Activated naive CD4-positive, alpha-beta T cell treated with anti-CD3 and anti-CD28 coated beads for 36 hours (primary cell): ENCODE measurements at regions of chr13 and their contacts with region 1.

Region 1: GRCh38 chr13:113029487-113030258 is 60.7 kb downstream of the MCF2L start:
- DNase-seq: peak; percentile 65
- H3K4me3 Mint-ChIP-seq: no peak overlapping the region
- H3K27ac Mint-ChIP-seq: no peak overlapping the region
- H3K4me1 Mint-ChIP-seq: no peaks in the 10 kb centered on the region
- H3K27me3 Mint-ChIP-seq: no peaks in the 10 kb centered on the region

Region 2: GRCh38 chr13:112968908-112969691 is 60.6 kb before region 1 on chr13 and contains the start of gene MCF2L:
- CTCF ChIA-PET with region 1: interaction called, 4 read pairs
- intact Hi-C with region 1: loop called (anchors 1 kb)
- DNase-seq: peak; percentile 76
- H3K4me3 Mint-ChIP-seq: peak within 1 kb of the TSS; percentile 91
- H3K27ac Mint-ChIP-seq: peak within 1 kb of the TSS; percentile 74
- H3K4me1 Mint-ChIP-seq: peaks cover 25% of the 10 kb centered on the region
- H3K27me3 Mint-ChIP-seq: no peaks in the 10 kb centered on the region
- total RNA-seq, gene MCF2L: 6.5 to 7.4 TPM

Region 3: DNA sequence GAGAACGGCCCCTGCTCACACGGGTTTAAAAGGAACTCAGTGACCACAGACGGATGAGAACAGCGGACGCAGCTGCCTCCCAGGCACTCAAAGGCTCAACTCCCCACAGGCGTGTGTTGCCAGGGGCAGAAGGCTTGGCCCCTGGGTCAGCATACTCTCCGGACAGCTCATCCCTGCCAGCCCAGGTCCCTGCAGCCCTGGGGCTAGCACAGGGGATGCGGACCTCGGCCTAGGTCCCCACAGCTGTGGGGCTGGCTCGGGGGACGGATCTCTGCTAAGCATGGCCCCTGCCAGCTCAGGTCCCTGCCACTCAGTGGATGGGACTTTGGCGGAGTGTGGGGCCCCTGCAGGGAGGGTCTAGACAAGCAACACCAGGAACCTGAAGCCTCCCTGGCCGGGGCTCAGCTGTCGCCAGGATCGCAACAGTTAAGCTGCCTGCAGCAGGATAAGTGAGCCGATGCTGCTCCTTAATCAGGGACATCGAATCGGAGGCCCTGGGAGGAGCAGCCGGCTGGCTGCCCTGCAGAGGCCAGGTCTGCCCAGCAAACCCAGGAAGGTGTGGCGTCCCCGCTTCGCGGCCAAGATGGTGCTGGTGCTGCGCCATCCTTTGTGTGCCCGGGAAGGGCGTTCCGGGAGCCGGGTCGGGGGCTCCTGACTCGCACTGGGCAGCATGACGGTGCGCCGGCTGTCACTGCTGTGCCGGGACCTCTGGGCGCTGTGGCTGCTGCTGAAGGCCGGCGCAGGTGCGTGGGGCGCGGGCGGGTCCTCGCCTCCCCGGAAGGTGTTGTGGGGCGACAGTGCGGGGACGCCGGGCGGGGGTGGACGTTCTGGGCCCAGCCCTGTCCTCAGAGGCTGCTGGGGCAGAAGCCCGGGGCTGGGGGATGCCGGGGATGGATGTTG is 28.2 kb before region 1 on chr13:
- CTCF ChIA-PET with region 1: interaction called, 11 read pairs
- intact Hi-C with region 1: no loop called
- DNase-seq: no peak
- H3K4me3 Mint-ChIP-seq: no peak overlapping the region
- H3K27ac Mint-ChIP-seq: no peak overlapping the region
- H3K4me1 Mint-ChIP-seq: peaks cover 30% of the 10 kb centered on the region
- H3K27me3 Mint-ChIP-seq: no peaks in the 10 kb centered on the region